ENCODE measurements at regions of chr15 and their contacts with region 1.

Region 1: GRCh38 chr15:78299101-78299930 is at the start of gene SKIC8:
- DNase-seq: peak; percentile 94
- H3K4me3 Mint-ChIP-seq: peak within 1 kb of the TSS; percentile 99
- H3K27ac Mint-ChIP-seq: peak within 1 kb of the TSS; percentile 84
- H3K4me1 Mint-ChIP-seq: peaks cover 40% of the 10 kb centered on the region
- H3K27me3 Mint-ChIP-seq: no peaks in the 10 kb centered on the region
- total RNA-seq, gene SKIC8: 50.1 to 51.3 TPM

Region 2: GRCh38 chr15:78264304-78265136 is 34.8 kb before region 1 on chr15 and contains the start of gene DNAJA4:
- CTCF ChIA-PET with region 1: interaction called, 12 read pairs
- POLR2A ChIA-PET with region 1: interaction called, 34 read pairs
- intact Hi-C with region 1: loop called (anchors 2 kb)
- DNase-seq: peak; percentile 66
- H3K4me3 Mint-ChIP-seq: peak within 1 kb of the TSS; percentile 78
- H3K27ac Mint-ChIP-seq: peak within 1 kb of the TSS; percentile 75
- H3K4me1 Mint-ChIP-seq: peaks cover 25% of the 10 kb centered on the region
- H3K27me3 Mint-ChIP-seq: no peaks in the 10 kb centered on the region
- total RNA-seq, gene DNAJA4: 36.3 to 39.6 TPM

Region 3: GRCh38 chr15:78422571-78423340 is 123.4 kb after region 1 on chr15:
- CTCF ChIA-PET with region 1: interaction called, 10 read pairs
- POLR2A ChIA-PET with region 1: interaction called, 3 read pairs
- intact Hi-C with region 1: no loop called
- DNase-seq: peak; percentile 76
- H3K4me3 Mint-ChIP-seq: no peak overlapping the region
- H3K27ac Mint-ChIP-seq: no peak overlapping the region
- H3K4me1 Mint-ChIP-seq: peaks cover 17% of the 10 kb centered on the region
- H3K27me3 Mint-ChIP-seq: peaks cover 4% of the 10 kb centered on the region

Measured in activated CD4-positive, alpha-beta memory T cell treated with anti-CD3 and anti-CD28 coated beads for 36 hours (primary cell).